Heart left ventricle (tissue), 16 donors: ENCODE measurements at regions of chr12 and their contacts with region 1.

Region 1: GRCh38 chr12:8554451-8555195 is 13.9 kb upstream of the CLEC4E start:
- DNase-seq: no peak
- ATAC-seq: no peak
- H3K4me3 ChIP-seq: no peak overlapping the region
- H3K27ac ChIP-seq: no peak overlapping the region
- H3K4me1 ChIP-seq: no peaks in the 10 kb centered on the region
- H3K27me3 ChIP-seq: peaks cover 0 to 7% (median 0%) of the 10 kb centered on the region in 9 donors
- CTCF ChIP-seq: no peak
- POLR2A ChIP-seq: no peak

Region 2: DNA sequence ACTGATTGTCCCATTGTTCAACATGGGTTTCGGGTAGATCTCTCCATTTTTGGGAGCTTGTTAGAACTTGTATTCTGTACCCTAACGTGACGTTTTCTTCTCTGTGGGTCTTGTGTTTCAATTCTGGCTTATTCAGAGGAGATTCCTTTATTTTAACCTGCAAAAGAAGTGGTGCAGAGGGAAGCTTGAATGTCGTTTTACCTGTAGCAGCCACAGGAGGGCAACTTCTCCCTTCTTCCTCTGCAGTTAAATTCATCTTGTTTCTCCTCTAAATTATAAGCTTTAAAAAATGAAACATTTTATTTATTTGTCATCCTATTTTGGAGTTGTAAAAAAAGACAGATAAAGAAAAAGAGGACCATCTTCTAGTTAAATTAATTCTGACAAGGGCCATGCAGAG is 55.0 kb before region 1 on chr12:
- intact Hi-C with region 1: no loop called
- DNase-seq: no peak
- ATAC-seq: no peak
- H3K4me3 ChIP-seq: no peak overlapping the region
- H3K27ac ChIP-seq: no peak overlapping the region
- H3K4me1 ChIP-seq: no peaks in the 10 kb centered on the region
- H3K27me3 ChIP-seq: peaks cover 0 to 11% (median 0%) of the 10 kb centered on the region in 9 donors
- CTCF ChIP-seq: no peak
- POLR2A ChIP-seq: no peak

Region 3: GRCh38 chr12:8870586-8870985 is 316.0 kb after region 1 on chr12:
- intact Hi-C with region 1: loop called in 1 of 10 experiments (anchors 10 kb)
- DNase-seq: no peak
- ATAC-seq: peak; percentile 47 to 73 (median 53)
- H3K4me3 ChIP-seq: no peak overlapping the region
- H3K27ac ChIP-seq: peak overlapping the region in 1 of 12 donors; percentile 66
- H3K4me1 ChIP-seq: no peaks in the 10 kb centered on the region
- H3K27me3 ChIP-seq: no peaks in the 10 kb centered on the region
- CTCF ChIP-seq: no peak
- POLR2A ChIP-seq: no peak